ENCODE measurements at regions of chr15 and their contacts with region 1.

Region 1: DNA sequence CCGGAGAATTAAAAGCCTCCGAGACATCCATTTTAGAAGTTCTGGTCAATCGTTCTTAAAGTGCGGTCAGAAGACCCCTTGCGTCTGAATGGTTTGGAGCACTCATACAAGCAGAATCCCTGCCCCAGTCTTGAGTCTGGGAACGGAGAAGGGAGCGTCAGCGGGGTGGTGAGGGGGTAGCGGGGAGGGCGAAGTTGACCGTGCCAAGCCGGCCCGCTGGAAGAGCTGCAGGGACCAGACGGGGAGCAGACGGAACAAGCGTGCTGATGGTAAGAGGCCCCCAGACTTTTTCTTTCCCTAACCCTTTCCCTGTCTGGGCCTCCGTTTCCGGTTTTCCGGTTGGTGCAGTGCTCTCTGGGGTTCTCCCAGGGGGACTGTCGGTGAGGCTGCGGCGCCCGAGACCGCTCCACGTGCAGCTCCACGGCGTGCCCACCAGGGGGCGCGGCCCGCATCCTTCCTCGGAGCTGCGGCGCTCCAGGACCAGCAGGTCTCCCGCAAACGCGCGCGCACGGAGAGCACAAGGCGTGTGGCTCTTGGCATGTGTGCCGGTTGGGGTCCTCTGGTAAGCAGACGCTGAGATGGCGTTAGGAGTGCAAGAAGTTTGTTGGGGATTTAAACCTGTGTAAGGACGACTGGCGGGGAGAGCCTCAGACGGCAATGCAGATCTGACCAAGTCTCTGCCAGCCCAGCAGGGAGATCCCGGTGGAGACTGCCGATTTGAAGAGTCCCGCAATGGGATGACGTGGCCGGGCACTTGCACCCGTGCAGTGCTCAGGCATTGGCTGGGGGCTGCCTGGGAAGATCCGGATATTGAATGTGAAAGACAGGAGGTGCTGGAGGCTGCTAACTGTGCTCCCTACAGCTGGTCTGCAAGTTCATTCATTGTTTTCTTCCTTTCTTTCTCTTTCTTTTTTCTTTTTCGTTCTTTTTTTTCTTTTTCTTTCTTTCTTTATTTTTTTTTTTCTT is 19.2 kb upstream of the CORO2B start:
- DNase-seq: peak; percentile 89
- CTCF ChIP-seq: peak; percentile 95

Region 2: GRCh38 chr15:68672781-68673205 is 113.2 kb after region 1 on chr15:
- in situ Hi-C with region 1: loop called (anchors 10 kb)
- DNase-seq: no peak
- CTCF ChIP-seq: no peak

Region 3: GRCh38 chr15:68875377-68876116 is 315.9 kb after region 1 on chr15:
- in situ Hi-C with region 1: loop called (anchors 10 kb)
- DNase-seq: peak; percentile 84
- CTCF ChIP-seq: peak; percentile 90